Ovary (tissue), 10 donors: ENCODE measurements at regions of chr4 and their contacts with region 1.

Region 1: DNA sequence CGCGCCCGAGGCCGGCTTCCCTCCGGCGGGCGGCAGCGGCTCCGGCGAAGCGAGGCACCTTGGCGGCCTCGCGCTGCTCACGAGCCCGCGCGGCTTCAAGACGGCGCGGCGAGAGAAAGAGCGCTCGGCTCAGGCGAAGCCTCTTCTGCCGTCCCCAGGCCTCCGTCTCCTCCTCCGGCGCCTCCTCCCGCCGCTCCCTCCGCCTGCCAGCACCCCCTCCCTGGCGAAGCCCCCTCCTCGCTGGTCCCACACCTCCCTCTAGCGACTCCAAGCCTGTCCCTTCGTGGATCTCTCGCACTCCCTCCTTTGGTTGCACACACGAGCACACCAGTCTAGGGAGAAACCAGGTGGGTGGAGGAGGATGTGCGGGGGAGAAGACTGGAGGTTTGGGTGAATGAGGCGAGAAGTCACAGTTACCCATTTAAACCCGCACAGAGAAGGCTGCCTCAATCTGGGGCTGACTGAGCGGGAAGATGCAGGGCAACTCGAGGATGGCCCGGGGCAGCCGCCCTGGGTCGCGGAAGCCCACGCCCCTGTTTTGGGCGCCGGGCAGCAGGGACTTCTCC is at the start of gene CAMK2D:
- DNase-seq: peak; percentile 88 to 93 (median 90)
- H3K4me3 ChIP-seq: peak within 1 kb of the TSS; percentile 84
- H3K27ac ChIP-seq: peak within 1 kb of the TSS; percentile 99 to 100
- H3K4me1 ChIP-seq: peaks cover 1% of the 10 kb centered on the region
- H3K27me3 ChIP-seq: no peaks in the 10 kb centered on the region
- CTCF ChIP-seq: peak; percentile 37 to 72 (median 59)
- EP300 ChIP-seq: no peak
- POLR2A ChIP-seq: peak; percentile 45
- total RNA-seq, gene CAMK2D: 30.6 to 36.9 (median 32.5) TPM

Region 2: GRCh38 chr4:113394730-113395530 is 366.8 kb before region 1 on chr4:
- intact Hi-C with region 1: loop called in 3 of 4 experiments (anchors 5 to 10 kb)
- DNase-seq: peak in 3 of 5 donors; percentile 26 to 63 (median 38)
- H3K4me3 ChIP-seq: no peak overlapping the region
- H3K27ac ChIP-seq: no peak overlapping the region
- H3K4me1 ChIP-seq: no peaks in the 10 kb centered on the region
- H3K27me3 ChIP-seq: no peaks in the 10 kb centered on the region
- CTCF ChIP-seq: peak; percentile 64 to 90 (median 70)
- EP300 ChIP-seq: no peak
- POLR2A ChIP-seq: no peak

Region 3: GRCh38 chr4:113547487-113548042 is 214.1 kb before region 1 on chr4:
- intact Hi-C with region 1: loop called in 3 of 4 experiments (anchors 5 to 10 kb)
- DNase-seq: peak; percentile 68 to 82 (median 78)
- H3K4me3 ChIP-seq: no peak overlapping the region
- H3K27ac ChIP-seq: no peak overlapping the region
- H3K4me1 ChIP-seq: no peaks in the 10 kb centered on the region
- H3K27me3 ChIP-seq: no peaks in the 10 kb centered on the region
- CTCF ChIP-seq: peak; percentile 79 to 83 (median 82)
- EP300 ChIP-seq: no peak
- POLR2A ChIP-seq: no peak

Region 4: DNA sequence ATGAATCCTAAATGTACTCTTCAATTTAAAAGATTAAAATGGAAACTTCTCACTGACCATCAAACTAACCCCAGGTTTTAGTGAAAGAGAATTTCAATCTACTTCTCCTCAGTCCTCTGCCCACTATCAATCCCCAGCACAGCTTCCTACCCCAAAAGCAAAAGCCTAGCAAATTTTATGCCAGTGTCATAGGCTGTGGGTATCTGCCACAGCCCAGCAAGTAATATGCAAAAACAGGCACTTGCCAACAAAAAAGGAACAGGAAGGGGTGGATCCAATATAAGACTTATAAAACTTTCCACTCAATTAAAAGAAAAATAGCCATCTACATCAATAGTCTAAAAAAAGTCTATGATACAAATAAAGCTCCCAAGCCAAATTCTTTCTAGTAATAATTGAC is 22.5 kb before region 1 on chr4:
- intact Hi-C with region 1: loop called in 1 of 4 experiments (anchors 1 kb)
- DNase-seq: no peak
- H3K4me3 ChIP-seq: no peak overlapping the region
- H3K27ac ChIP-seq: no peak overlapping the region
- H3K4me1 ChIP-seq: no peaks in the 10 kb centered on the region
- H3K27me3 ChIP-seq: no peaks in the 10 kb centered on the region
- CTCF ChIP-seq: no peak
- EP300 ChIP-seq: no peak
- POLR2A ChIP-seq: no peak

Region 5: DNA sequence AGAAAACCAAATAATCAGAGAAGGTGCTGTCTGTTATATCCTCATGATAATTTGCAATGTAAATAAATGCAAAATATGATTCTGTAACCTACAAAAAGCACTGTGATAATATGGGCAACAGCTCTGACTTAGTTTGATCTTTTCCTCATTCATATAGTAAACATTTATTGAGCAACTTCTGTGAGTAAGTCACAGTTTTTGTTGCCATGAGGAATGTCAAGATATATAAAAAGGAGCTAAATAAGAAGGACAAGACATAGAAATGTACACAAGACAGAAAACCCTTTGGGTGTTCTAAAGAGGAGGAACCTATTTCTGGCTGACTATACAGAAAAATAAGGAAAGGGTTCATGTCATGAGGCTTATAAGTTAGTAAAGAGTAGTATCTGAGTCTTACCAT is 173.5 kb after region 1 on chr4:
- intact Hi-C with region 1: no loop called
- DNase-seq: no peak
- H3K4me3 ChIP-seq: no peak overlapping the region
- H3K27ac ChIP-seq: no peak overlapping the region
- H3K4me1 ChIP-seq: no peaks in the 10 kb centered on the region
- H3K27me3 ChIP-seq: no peaks in the 10 kb centered on the region
- CTCF ChIP-seq: no peak
- EP300 ChIP-seq: no peak
- POLR2A ChIP-seq: no peak

Region 6: DNA sequence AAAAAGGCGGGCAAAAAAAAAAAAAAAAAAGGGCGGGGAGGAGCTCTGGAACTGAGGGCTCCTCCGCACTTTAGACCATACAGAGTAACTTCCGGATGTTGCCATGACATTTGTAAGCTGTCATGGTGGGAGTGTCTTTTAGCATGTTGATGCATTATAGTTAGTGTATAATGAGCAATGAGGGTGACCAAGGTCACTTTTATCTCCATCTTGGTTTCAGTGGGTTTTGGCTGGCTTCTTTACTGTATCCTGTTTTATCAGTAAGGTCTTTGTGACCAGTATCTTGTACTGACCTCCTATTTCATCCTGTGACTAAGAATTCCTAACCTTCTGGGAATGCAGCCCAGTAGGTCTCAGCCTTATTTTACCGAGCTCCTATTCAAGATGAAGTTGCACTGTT is 1030.3 kb after region 1 on chr4:
- intact Hi-C with region 1: no loop called
- DNase-seq: no peak
- H3K4me3 ChIP-seq: no peak overlapping the region
- H3K27ac ChIP-seq: no peak overlapping the region
- H3K4me1 ChIP-seq: no peaks in the 10 kb centered on the region
- H3K27me3 ChIP-seq: no peaks in the 10 kb centered on the region
- CTCF ChIP-seq: no peak
- EP300 ChIP-seq: no peak
- POLR2A ChIP-seq: no peak